GM10248 (cell line): ENCODE measurements at regions of chr12 and their contacts with region 1.

Region 1: GRCh38 chr12:28872654-28873268 is 276.3 kb upstream of the FAR2 start:
- DNase-seq: peak; percentile 27
- CTCF ChIP-seq: peak; percentile 78

Region 2: GRCh38 chr12:27733052-27733656 is 1139.6 kb before region 1 on chr12:
- CTCF ChIA-PET with region 1: interaction called, 30 read pairs
- POLR2A ChIA-PET with region 1: no interaction called
- DNase-seq: peak; percentile 39
- CTCF ChIP-seq: peak; percentile 83

Region 3: DNA sequence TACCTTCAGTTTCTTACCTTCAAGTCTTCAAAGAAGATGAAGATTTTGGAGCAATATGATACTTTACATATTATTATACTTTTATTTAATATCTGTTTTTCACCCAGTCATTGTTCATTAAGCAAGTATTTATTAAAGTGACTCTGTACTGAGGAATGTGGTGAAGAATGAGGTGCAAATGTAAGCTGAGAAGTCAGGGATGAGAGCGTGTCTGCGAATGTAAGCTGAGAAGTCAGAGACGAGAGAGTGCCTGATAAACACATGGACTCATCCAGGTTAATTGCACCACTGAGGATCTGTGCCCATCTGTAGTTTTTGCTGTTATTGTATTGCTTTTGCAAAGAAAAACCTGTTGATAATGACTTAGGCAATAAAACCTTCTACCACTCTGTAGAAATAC is 64.4 kb after region 1 on chr12:
- CTCF ChIA-PET with region 1: no interaction called
- POLR2A ChIA-PET with region 1: no interaction called
- DNase-seq: no peak
- CTCF ChIP-seq: no peak